ENCODE measurements at regions of chr1 and their contacts with region 1.

Region 1: GRCh38 chr1:111448918-111449702 is at the starts of genes ATP5PB and WDR77:
- DNase-seq: peak; percentile 98 to 100 (median 99)
- H3K4me3 ChIP-seq: peak within 1 kb of the TSS; percentile 90 to 97 (median 94)
- H3K4me3 Mint-ChIP-seq: peak within 1 kb of the TSS; percentile 99 to 100
- H3K27ac ChIP-seq: peak within 1 kb of the TSS; percentile 87 to 95
- H3K27ac Mint-ChIP-seq: peak within 1 kb of the TSS; percentile 98 to 100 (median 99)
- H3K4me1 ChIP-seq: peaks cover 25 to 41% of the 10 kb centered on the region in 2 donors
- H3K4me1 Mint-ChIP-seq: peaks cover 49% of the 10 kb centered on the region
- H3K27me3 ChIP-seq: no peaks in the 10 kb centered on the region
- H3K27me3 Mint-ChIP-seq: peaks cover 0 to 2% (median 0%) of the 10 kb centered on the region in 3 donors
- CTCF ChIP-seq: no peak
- polyA plus RNA-seq, gene ATP5PB: 112 to 597 (median 557) TPM
- polyA plus RNA-seq, gene WDR77: 26.4 to 62.2 (median 28.1) TPM

Region 2: DNA sequence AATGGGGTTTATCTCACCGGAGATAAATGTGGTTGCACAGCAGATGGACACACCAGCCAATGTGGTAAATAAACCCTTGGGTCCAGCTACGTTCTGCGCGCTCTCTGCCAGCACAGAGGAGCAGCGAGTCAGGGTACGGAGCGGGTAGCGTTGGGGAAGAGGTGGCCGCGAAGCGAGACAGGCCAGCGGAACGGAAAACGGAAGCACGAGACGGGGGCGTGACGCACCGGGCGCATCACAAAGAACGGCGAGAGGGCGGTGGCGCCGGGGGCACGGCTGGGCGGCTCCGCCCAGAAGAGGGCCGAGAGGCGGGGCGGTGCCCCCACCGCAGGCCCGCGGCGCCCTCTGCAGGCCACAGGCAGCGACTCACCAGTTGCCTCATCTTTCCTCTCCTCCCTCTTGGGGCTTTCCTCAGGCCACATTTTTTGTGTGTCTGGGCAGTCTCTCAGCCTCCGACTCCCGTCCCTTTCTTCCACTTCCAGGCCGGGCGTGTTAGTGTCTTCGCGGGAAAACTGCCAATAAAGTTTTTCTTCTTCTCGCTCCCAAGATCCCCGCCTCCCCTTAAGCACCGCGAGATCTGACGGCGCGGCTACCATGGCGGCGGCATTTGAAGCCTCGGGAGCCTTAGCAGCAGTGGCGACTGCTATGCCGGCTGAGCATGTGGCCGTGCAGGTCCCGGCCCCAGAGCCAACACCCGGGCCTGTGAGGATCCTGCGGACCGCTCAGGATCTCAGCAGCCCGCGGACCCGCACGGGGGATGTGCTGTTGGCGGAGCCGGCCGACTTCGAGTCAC is 306.4 kb after region 1 on chr1 and contains the start of gene DDX20:
- intact Hi-C with region 1: loop called in 1 of 2 experiments (anchors 5 kb)
- DNase-seq: peak; percentile 94 to 96 (median 96)
- H3K4me3 ChIP-seq: peak within 1 kb of the TSS; percentile 75 to 96 (median 85)
- H3K4me3 Mint-ChIP-seq: peak within 1 kb of the TSS; percentile 86 to 96
- H3K27ac ChIP-seq: peak within 1 kb of the TSS; percentile 88 to 98
- H3K27ac Mint-ChIP-seq: peak within 1 kb of the TSS; percentile 97 to 100 (median 99)
- H3K4me1 ChIP-seq: peaks cover 27 to 30% of the 10 kb centered on the region in 2 donors
- H3K4me1 Mint-ChIP-seq: peaks cover 35% of the 10 kb centered on the region
- H3K27me3 ChIP-seq: no peaks in the 10 kb centered on the region
- H3K27me3 Mint-ChIP-seq: peaks cover 0 to 2% (median 1%) of the 10 kb centered on the region in 3 donors
- CTCF ChIP-seq: peak; percentile 84
- polyA plus RNA-seq, gene DDX20: 3.1 to 4.1 (median 4.0) TPM